Activated CD8-positive, alpha-beta T cell treated with anti-CD3 and anti-CD28 coated beads for 36 hours (primary cell): ENCODE measurements at regions of chr2 and their contacts with region 1.

Region 1: GRCh38 chr2:11829947-11830707 is 83.7 kb downstream of the LPIN1 start:
- DNase-seq: peak; percentile 69
- ATAC-seq: peak; percentile 78
- H3K4me3 Mint-ChIP-seq: peak overlapping the region; percentile 49
- H3K27ac Mint-ChIP-seq: peak overlapping the region; percentile 72
- H3K4me1 Mint-ChIP-seq: peaks cover 54% of the 10 kb centered on the region
- H3K27me3 Mint-ChIP-seq: peaks cover 15% of the 10 kb centered on the region
- CTCF ChIP-seq: no peak

Region 2: GRCh38 chr2:12005886-12006681 is 176.0 kb after region 1 on chr2:
- CTCF ChIA-PET with region 1: interaction called, 3 read pairs
- POLR2A ChIA-PET with region 1: no interaction called
- intact Hi-C with region 1: loop called (anchors 5 kb)
- DNase-seq: peak; percentile 91
- ATAC-seq: peak; percentile 92
- H3K4me3 Mint-ChIP-seq: no peak overlapping the region
- H3K27ac Mint-ChIP-seq: no peak overlapping the region
- H3K4me1 Mint-ChIP-seq: peaks cover 25% of the 10 kb centered on the region
- H3K27me3 Mint-ChIP-seq: peaks cover 51% of the 10 kb centered on the region
- CTCF ChIP-seq: no peak

Region 3: DNA sequence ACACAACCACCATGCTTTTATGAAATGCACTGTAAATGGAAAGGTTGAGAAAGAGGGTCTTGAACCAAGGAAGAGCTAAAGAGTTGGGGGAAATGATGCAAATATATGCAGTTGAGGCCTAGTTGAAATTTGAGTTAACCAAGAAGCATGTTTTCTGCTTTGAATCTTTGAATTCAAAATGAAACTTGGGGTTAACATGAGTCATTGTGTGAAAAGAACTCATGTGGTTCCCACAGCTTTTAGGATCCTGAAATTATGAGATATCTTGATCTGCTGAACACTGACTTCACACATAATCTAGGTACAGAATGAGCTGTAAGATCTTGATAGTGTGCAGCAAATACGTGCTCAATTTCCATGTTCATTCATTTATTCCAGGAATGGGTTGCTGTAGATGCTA is 463.7 kb after region 1 on chr2:
- CTCF ChIA-PET with region 1: no interaction called
- POLR2A ChIA-PET with region 1: no interaction called
- intact Hi-C with region 1: loop called (anchors 1 kb)
- DNase-seq: peak; percentile 15
- ATAC-seq: peak; percentile 93
- H3K4me3 Mint-ChIP-seq: no peak overlapping the region
- H3K27ac Mint-ChIP-seq: peak overlapping the region; percentile 53
- H3K4me1 Mint-ChIP-seq: peaks cover 41% of the 10 kb centered on the region
- H3K27me3 Mint-ChIP-seq: peaks cover 2% of the 10 kb centered on the region
- CTCF ChIP-seq: no peak